Body of pancreas (tissue), 4 donors: ENCODE measurements at regions of chr18 and their contacts with region 1.

Region 1: GRCh38 chr18:70431203-70431624 is 142.4 kb downstream of the SOCS6 start:
- DNase-seq: no peak
- ATAC-seq: no peak
- H3K4me3 ChIP-seq: no peak overlapping the region
- H3K27ac ChIP-seq: no peak overlapping the region
- H3K4me1 ChIP-seq: no peaks in the 10 kb centered on the region
- H3K27me3 ChIP-seq: no peaks in the 10 kb centered on the region
- CTCF ChIP-seq: no peak
- POLR2A ChIP-seq: no peak

Region 2: DNA sequence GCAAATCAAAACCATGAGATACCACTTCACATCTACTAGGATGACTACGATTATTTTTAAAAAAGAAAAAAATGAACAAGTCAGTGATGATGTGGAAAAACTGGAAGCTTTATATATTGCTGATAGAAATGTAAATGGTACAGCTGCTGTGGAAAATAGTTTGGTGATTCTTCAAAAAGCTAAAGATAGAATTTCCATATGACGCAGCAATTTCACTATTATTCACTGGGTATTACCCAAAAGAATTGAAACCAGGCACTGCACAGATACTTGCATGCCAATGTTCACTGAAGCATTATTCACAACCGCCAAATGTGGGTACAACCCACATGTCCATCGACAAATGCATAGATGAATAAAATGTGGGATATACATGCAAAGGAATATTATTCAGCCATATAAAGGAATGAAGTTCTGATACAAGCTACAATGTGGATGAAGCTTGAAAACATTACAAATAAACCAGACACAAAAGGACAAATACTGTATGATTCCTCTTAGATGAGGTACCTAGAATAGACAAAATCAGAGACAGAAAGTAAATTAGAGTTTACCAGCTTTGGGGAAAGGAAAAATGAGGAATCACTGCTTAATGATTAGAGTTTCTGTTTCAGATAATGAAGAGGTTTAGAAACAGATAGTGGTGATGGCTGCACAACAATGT is 236.9 kb before region 1 on chr18:
- intact Hi-C with region 1: loop called (anchors 5 kb)
- DNase-seq: no peak
- ATAC-seq: no peak
- H3K4me3 ChIP-seq: no peak overlapping the region
- H3K27ac ChIP-seq: no peak overlapping the region
- H3K4me1 ChIP-seq: no peaks in the 10 kb centered on the region
- H3K27me3 ChIP-seq: no peaks in the 10 kb centered on the region
- CTCF ChIP-seq: no peak
- POLR2A ChIP-seq: no peak